ENCODE measurements at regions of chr3 and their contacts with region 1.

Region 1: GRCh38 chr3:58414538-58415197 is 19.0 kb downstream of the PDHB start:
- DNase-seq: peak; percentile 48
- H3K4me3 Mint-ChIP-seq: no peak overlapping the region
- H3K27ac Mint-ChIP-seq: no peak overlapping the region
- H3K4me1 Mint-ChIP-seq: peaks cover 3% of the 10 kb centered on the region
- H3K27me3 Mint-ChIP-seq: no peaks in the 10 kb centered on the region

Region 2: GRCh38 chr3:58237238-58237940 is 177.3 kb before region 1 on chr3 and contains the start of gene ABHD6:
- CTCF ChIA-PET with region 1: no interaction called
- POLR2A ChIA-PET with region 1: no interaction called
- intact Hi-C with region 1: loop called (anchors 1 kb)
- DNase-seq: peak; percentile 85
- H3K4me3 Mint-ChIP-seq: peak within 1 kb of the TSS; percentile 85
- H3K27ac Mint-ChIP-seq: peak within 1 kb of the TSS; percentile 62
- H3K4me1 Mint-ChIP-seq: peaks cover 8% of the 10 kb centered on the region
- H3K27me3 Mint-ChIP-seq: peaks cover 12% of the 10 kb centered on the region
- total RNA-seq, gene ABHD6: 3.9 to 4.1 TPM

Region 3: GRCh38 chr3:58266577-58266976 is 148.1 kb before region 1 on chr3:
- CTCF ChIA-PET with region 1: no interaction called
- POLR2A ChIA-PET with region 1: no interaction called
- intact Hi-C with region 1: no loop called
- DNase-seq: no peak
- H3K4me3 Mint-ChIP-seq: no peak overlapping the region
- H3K27ac Mint-ChIP-seq: no peak overlapping the region
- H3K4me1 Mint-ChIP-seq: no peaks in the 10 kb centered on the region
- H3K27me3 Mint-ChIP-seq: no peaks in the 10 kb centered on the region

Region 4: DNA sequence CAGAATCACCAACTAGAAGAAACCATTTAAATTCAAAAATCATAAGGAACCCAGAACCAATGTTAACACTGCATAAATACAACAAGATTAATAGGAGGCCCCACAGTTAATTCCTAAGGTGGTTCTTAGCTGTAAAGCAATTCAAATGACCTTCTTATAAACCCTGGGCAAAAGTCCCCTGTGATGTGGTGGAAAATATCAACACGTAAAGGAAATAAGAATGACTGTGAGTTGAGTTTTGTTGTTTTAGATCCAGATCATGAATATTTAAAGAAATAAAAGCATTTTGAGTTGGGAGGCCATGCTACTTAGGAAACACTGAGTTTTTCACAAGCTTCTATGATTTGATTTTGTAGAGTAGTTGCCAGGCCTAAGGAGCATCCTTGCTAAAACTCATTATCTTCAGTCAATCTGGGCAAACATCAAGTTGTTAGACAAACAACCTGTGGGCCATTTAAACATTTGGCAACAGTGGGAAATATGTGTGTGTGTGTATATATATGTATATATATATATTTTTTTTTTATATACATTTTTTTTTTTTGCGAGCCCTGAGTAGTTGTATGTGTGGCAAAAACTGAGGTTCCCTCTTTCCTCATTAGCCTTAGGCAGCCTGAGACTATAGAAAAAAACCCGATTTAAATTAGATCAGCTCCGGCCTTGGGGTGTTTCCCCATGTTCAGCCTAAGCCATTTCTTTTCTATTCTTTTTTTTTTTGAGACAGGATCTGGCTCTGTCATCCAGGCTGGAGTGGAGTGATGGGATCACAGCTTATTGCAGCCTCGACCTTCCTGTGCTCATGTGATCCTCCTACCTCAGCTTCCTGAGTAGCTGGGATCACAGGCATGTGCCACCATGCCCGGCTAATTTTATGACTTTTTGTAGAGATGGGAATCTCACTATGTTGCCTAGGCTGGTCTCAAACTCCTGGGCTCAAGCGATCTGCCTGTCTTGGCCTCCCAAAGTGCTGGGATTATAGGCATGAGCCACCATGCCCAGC is 90.0 kb before region 1 on chr3:
- CTCF ChIA-PET with region 1: interaction called, 51 read pairs
- POLR2A ChIA-PET with region 1: interaction called, 3 read pairs
- intact Hi-C with region 1: loop called (anchors 1 kb)
- DNase-seq: no peak
- H3K4me3 Mint-ChIP-seq: peak overlapping the region; percentile 34
- H3K27ac Mint-ChIP-seq: peak overlapping the region; percentile 93
- H3K4me1 Mint-ChIP-seq: peaks cover 37% of the 10 kb centered on the region
- H3K27me3 Mint-ChIP-seq: no peaks in the 10 kb centered on the region

Region 5: GRCh38 chr3:58556761-58557221 is 142.1 kb after region 1 on chr3:
- CTCF ChIA-PET with region 1: no interaction called
- POLR2A ChIA-PET with region 1: no interaction called
- intact Hi-C with region 1: no loop called
- DNase-seq: no peak
- H3K4me3 Mint-ChIP-seq: no peak overlapping the region
- H3K27ac Mint-ChIP-seq: no peak overlapping the region
- H3K4me1 Mint-ChIP-seq: no peaks in the 10 kb centered on the region
- H3K27me3 Mint-ChIP-seq: no peaks in the 10 kb centered on the region

Measured in activated CD4-positive, alpha-beta memory T cell treated with anti-CD3 and anti-CD28 coated beads for 36 hours (primary cell).